T47D (cell line): ENCODE measurements at regions of chr17 and their contacts with region 1.

Region 1: DNA sequence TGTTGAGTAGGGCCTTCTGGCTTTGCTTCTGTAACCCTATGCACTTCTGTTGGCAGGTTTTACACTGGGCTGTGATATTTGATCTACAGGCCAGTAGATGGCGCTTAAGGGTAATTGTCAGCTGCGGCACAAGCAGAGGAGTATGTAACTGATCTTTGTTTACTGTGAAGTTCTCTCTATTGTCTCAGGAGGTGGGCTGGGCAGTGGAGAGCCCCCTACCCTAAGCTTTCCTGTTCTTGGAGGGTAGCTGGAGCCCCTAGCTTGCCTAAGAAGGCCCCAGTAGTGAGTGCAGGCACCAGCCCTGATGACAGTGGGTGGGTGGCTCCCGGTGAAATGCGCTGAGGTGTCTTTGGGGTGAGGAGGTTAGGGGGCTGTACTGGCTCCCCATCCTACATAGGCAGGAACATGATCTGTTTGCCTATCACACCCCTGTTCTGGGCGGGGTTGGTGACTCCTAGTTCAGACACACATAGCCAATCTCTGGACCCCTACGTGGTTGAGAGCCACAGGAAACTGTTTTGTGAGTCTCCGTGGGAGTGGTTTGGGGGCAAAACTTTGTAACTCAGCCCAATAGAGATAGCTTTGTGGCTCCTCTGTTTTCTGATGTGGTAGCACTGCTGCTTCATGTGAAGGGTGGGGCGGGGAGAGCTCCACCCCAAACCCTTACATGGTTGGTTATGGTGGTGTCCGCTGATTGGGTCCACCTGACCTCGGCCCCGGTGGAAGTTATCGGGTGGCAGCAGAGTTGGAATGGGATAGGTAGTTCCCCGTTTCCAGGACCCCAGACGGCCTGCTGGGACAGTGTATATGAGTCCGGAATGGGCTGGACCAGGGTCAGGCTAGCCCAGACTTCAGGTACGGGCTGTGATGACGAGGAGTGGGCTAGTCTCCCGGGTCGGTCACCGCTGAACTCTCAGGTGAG is 60.4 kb downstream of the SLFN11 start:
- DNase-seq: peak; percentile 63 to 77

Region 2: DNA sequence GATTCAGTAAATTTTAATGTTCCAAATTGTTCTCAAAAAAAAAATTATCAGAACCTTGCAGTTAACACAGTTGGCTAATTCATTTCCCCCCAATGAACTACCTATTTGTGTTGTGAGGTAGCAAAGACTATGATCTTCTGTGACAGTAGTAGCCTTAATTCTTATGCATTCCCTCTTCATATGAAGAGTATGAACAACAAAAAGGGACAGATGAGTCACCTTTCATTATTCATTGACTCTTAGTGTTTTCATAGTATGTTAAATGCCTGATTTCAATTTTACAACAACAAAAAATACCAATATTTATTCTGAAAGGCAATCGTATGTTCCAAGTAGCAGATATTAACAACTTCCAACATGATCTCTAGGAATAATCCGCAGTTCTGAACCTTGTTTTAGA is 64.0 kb after region 1 on chr17:
- in situ Hi-C with region 1: no loop called
- DNase-seq: no peak

Region 3: DNA sequence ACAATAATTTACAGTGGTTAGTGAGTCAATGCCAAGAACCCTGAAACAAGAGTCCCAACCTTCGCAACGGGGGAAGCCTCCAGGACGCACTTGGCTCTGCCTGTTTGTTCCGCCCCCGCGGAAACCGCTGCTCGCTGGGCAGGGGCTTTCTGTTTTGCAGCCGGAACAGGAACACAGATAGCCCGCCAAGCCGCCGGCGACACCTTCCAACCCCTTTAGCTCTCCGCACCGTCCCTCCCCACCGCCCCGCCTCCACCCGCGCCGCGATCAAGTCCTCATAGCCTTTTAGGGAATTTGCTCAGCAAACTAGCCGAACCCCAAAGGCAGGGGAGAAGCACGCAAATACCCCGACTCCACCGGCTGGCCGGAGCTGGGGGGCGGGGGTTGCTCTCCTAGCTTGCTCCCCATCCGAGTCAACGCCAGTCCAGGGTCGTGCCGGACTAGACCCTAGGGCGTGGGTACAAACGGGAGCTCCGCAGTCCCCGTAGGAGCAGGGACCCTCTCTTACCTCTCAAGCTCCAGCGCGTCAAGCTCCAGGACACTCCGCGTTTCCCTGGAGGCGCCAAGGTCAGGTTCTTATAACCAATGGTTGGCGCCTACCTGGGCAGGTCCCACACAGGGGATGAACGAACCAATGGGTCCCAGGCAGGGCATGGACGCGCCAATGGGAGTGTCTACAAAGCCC is 135.3 kb after region 1 on chr17 and contains the start of gene SLFN13:
- in situ Hi-C with region 1: no loop called
- DNase-seq: peak; percentile 74 to 91

Region 4: GRCh38 chr17:35540589-35541404 is 227.7 kb after region 1 on chr17:
- in situ Hi-C with region 1: loop called (anchors 25 kb)
- DNase-seq: peak in 1 of 2 experiments; percentile 11

Region 5: DNA sequence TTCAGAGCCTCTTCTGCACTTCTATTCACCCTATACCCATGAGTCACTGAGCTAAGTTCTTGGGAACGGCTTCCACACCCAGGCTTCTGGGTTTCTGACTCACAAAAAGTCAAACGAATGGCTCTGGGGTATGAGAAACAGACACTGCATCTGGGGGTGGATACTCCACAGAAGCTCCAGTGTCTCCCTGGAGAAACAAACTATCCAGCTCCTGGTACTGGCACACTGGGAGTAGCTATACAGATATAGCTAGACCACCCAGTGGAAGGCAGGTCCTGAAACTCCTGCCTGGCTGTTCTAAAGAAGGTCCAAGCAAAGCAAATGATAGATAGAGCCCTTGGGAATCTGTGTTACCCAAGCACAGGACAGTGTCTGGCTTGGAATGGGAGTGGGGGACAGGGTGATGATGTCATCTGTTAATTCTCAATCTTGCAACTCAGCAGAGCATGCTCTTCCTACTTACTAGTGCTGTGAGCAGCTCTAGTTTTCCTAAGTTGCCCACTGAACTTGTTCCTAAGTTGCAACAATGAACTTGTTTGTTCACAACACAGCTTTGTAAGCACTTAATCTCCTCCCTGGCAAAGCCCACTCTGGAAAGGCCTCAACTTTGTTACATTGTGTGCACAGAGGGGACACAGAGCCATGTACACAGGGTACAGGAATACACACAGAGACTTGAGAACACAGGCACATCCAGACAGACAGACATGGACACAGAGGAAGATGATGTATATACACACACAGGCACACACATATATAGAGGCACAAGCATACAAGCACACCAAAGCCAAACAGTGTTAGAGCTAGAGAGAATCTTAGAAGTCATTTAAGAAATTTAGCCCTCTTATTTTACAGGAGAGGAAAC is 475.7 kb after region 1 on chr17:
- in situ Hi-C with region 1: no loop called
- DNase-seq: no peak